ENCODE measurements at regions of chr19 and their contacts with region 1.

Region 1: DNA sequence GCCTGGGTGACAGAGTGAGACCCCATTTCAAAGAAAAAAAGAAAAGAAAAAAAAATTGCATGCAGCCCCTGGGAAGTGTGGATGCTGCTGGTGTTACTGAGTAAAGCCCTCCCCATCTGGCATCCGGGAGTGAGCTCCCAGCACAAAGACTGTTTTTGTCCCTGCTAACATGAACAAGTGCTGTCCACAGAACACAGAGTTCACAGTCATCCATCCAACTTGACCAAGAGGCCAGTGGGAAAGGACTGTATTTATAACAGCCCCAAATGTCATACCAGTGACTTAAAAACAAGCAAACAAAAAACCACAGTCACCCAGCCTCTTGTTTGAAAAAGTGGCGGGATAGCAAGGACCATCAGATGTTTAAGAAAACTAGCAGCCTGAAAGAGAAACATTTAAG is 10.8 kb downstream of the FBXO17 start:
- DNase-seq: no peak
- H3K27ac ChIP-seq: no peak overlapping the region
- CTCF ChIP-seq: no peak

Region 2: DNA sequence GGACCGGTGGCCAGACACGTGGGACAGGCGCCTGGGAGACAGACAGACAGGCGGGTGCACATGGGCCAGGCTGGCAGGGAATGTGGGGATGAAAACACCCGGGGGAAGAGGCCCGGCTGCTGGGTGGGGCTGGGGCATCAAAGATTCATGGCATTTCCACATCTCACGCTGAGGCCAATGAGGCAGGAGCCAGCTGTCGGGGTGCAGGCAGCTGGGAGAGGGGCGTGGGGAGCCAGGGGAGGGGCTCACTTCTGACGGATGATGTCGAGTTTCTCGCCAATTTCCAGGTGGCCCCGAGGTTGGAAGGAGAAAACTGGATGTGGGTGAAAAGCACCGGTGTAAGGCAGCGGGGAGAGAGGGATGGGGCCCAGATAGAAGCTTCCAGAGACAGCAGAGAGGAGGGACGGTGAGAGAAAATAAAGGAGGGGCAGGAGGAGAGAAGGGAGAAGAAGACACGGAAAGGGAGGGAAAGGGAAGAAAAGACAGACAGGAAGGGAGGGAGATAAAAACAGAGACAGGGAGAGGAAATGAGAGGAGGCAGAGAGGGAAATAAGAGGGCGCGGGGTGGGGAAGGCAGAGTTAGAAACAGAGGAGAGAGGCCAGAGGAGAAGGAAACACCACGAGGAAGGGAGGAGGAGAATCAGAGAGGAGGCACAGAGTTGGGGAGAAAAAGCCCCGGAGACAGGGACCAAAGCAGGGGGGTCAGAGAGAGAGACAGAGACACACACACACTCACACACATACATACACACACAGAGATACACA is 44.7 kb before region 1 on chr19:
- CTCF ChIA-PET with region 1: no interaction called
- POLR2A ChIA-PET with region 1: no interaction called
- DNase-seq: no peak
- H3K27ac ChIP-seq: peak overlapping the region; percentile 44
- CTCF ChIP-seq: no peak

Region 3: DNA sequence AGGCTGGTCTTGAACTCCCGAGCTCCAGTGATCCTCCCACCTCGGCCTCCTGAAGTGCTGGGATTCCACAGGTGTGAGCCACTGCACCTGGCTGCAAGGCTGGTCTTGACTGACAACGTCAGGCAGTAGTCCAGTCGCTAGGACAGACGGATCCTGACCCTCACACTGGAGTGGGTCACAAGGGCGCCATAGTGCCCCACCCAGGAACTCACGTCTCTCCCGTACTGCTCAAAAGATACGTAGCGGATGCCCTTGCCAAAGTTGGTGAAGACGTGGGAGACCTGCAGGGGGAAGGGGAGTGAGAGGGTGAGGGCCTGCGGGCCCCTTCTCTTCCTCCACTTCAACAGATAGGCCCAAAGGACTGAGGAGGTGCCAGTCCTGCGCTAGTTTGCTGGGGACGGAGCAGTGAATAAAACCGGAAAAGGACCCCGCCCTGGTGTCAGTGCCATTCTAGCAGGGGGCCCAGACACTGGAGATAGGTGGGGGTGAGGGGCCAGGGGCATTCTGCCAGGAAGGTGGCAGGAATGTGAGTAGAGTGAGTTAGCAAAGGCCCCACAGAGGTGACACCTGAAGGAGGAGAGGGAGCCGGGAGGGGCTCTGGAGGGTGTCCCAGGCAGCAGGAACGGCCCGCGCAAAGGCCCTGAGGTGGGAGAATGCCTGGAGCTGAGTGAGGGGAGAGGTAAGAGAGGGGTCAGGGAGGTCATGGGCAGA is 22.1 kb before region 1 on chr19:
- CTCF ChIA-PET with region 1: interaction called, 11 read pairs
- POLR2A ChIA-PET with region 1: no interaction called
- DNase-seq: no peak
- H3K27ac ChIP-seq: no peak overlapping the region
- CTCF ChIP-seq: no peak

Region 4: DNA sequence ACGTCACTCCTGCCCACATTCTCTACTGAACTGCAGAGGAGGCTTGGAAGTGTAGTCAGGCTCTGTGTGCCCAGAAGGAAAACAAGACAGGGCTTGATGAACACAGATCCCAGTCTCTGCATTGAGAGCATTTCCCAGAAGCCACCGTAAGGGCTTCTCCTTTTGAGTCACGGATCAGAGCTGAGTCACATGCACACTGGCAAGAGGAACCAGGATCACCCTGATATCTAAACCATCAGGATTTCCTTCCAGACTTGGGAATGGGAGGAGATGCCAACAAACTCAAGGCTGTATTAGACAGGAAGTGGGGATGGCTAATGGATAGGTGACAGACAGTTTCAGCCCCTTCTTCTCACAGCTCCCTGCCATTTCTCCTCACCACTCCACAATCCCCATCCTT is 28.5 kb after region 1 on chr19:
- CTCF ChIA-PET with region 1: no interaction called
- POLR2A ChIA-PET with region 1: no interaction called
- DNase-seq: peak; percentile 70
- H3K27ac ChIP-seq: peak overlapping the region; percentile 86
- CTCF ChIP-seq: no peak

Region 5: GRCh38 chr19:39084732-39085080 is 120.0 kb after region 1 on chr19:
- CTCF ChIA-PET with region 1: interaction called, 10 read pairs
- POLR2A ChIA-PET with region 1: no interaction called
- DNase-seq: no peak
- H3K27ac ChIP-seq: no peak overlapping the region
- CTCF ChIP-seq: no peak

Measured in RWPE1 (cell line).